Panc1 (cell line): ENCODE measurements at regions of chr12 and their contacts with region 1.

Region 1: DNA sequence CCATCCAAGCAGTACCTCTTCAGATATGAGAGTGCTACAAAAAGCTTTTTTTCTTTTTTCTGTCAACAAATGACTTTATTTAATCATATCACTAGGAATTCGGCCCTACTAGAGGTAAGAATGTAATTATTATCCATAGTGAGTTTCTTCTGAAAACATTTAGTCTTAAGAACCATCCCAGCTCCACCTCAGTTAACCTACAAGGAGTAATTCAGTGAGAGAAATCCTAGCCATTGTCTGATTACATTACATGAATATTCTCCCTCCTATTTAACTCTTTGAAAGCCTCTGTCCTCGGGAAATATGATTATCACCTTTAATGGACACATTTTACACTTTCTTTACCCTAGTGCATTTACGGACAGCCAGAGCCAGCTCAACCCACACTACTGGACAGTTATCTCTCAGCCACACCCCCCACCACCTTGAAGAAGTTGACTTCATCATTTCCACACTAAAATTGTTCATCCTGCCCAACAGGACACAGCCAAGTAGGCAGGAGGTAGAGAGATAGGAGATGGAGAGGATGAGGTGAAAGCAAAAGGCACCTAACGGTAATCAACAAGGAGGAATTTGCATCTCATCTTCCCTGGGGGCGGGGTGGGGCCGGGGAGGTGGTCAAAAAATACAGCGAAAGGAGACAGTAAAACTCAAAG is 1.3 kb downstream of the PPFIA2 start:
- DNase-seq: no peak
- ATAC-seq: no peak
- H3K4me3 ChIP-seq: peak overlapping the region in 1 of 2 experiments; percentile 45; a peak in 2 of 4 replicates
- H3K27ac ChIP-seq: no peak overlapping the region
- H3K4me1 ChIP-seq: no peaks in the 10 kb centered on the region
- H3K27me3 ChIP-seq: peaks cover 19% of the 10 kb centered on the region
- CTCF ChIP-seq: no peak

Region 2: DNA sequence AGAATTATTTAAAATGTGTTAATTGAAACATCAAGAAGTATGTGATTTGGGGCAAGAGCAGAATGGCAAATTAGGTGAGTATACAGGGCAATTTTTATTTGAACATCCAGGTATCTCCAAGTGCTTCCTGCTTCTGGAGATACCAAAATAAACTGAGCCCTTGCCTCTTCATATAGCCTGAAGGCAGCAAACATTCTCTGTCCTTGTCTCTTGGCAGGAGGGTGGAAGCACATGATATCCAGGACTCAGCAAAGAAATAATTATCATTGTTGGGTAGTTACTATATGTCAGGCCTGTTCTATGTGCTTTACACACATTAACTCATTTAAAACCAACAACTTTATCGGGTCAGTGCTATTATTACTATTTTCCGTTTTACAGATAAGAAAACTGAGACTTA is 832.6 kb before region 1 on chr12:
- CTCF ChIA-PET with region 1: no interaction called
- POLR2A ChIA-PET with region 1: no interaction called
- in situ Hi-C with region 1: no loop called
- intact Hi-C with region 1: no loop called
- DNase-seq: no peak
- ATAC-seq: no peak
- H3K4me3 ChIP-seq: no peak overlapping the region
- H3K27ac ChIP-seq: no peak overlapping the region
- H3K4me1 ChIP-seq: no peaks in the 10 kb centered on the region
- H3K27me3 ChIP-seq: no peaks in the 10 kb centered on the region
- CTCF ChIP-seq: no peak

Region 3: GRCh38 chr12:81779216-81779615 is 21.4 kb after region 1 on chr12:
- CTCF ChIA-PET with region 1: no interaction called
- POLR2A ChIA-PET with region 1: interaction called, 14 read pairs
- in situ Hi-C with region 1: no loop called
- intact Hi-C with region 1: no loop called
- DNase-seq: no peak
- ATAC-seq: no peak
- H3K4me3 ChIP-seq: no peak overlapping the region
- H3K27ac ChIP-seq: no peak overlapping the region
- H3K4me1 ChIP-seq: no peaks in the 10 kb centered on the region
- H3K27me3 ChIP-seq: no peaks in the 10 kb centered on the region
- CTCF ChIP-seq: no peak

Region 4: GRCh38 chr12:81930037-81930436 is 172.2 kb after region 1 on chr12:
- CTCF ChIA-PET with region 1: no interaction called
- POLR2A ChIA-PET with region 1: no interaction called
- in situ Hi-C with region 1: no loop called
- intact Hi-C with region 1: no loop called
- DNase-seq: no peak
- ATAC-seq: no peak
- H3K4me3 ChIP-seq: no peak overlapping the region
- H3K27ac ChIP-seq: no peak overlapping the region
- H3K4me1 ChIP-seq: no peaks in the 10 kb centered on the region
- H3K27me3 ChIP-seq: no peaks in the 10 kb centered on the region
- CTCF ChIP-seq: no peak